HAP-1 (cell line): ENCODE measurements at regions of chr2 and their contacts with region 1.

Region 1: GRCh38 chr2:134232868-134233727 is 20.8 kb upstream of the MGAT5 start:
- DNase-seq: no peak
- H3K4me3 ChIP-seq: no peak overlapping the region
- H3K4me1 ChIP-seq: peaks cover 6% of the 10 kb centered on the region
- H3K27me3 ChIP-seq: no peaks in the 10 kb centered on the region

Region 2: DNA sequence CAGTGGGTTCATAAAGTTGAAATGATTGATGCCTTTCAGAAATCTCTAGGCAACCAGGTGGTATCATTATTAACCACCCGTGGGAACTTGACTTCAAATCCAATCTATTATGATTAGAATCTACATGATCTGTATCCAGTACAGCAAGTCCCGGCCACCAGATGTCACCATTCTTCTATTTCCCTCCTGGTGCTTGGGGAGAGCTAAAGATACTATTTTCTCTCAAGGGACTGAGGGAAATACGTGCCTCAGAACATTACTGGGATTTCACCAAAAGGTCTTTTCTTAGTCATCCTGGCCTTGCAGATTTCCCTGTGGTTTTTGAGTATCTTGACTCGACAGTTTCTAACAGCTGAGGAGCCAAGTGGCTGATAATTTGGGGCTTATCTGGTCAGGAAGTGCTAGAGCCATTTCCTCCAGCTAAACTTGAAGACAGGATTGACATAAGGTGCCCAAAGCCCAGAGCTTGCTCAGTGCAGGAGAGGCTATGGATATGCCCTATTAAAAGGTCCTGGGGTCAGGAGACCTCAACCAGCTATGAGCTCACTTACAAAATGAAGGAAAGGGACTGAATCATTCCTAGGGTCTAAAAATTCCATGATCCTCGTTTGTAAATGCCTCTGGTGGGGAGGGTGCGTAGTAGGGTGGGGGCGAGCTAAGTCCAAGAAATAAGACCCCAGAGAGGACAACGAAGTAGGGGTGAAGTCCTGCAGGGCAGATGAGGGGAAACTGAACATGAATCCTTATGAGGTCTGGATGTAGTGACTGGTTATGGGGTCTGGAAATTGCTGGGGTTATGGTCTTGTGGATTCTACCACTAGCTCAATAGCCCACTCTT is 114.6 kb before region 1 on chr2:
- in situ Hi-C with region 1: loop called (anchors 10 kb)
- DNase-seq: peak; percentile 87 to 93
- H3K4me3 ChIP-seq: no peak overlapping the region
- H3K4me1 ChIP-seq: peaks cover 19% of the 10 kb centered on the region
- H3K27me3 ChIP-seq: 0 out of 2 replicates have a peak, but pooled peaks cover 2% of the 10 kb centered on the region